ENCODE measurements at regions of chr18 and their contacts with region 1.

Region 1: DNA sequence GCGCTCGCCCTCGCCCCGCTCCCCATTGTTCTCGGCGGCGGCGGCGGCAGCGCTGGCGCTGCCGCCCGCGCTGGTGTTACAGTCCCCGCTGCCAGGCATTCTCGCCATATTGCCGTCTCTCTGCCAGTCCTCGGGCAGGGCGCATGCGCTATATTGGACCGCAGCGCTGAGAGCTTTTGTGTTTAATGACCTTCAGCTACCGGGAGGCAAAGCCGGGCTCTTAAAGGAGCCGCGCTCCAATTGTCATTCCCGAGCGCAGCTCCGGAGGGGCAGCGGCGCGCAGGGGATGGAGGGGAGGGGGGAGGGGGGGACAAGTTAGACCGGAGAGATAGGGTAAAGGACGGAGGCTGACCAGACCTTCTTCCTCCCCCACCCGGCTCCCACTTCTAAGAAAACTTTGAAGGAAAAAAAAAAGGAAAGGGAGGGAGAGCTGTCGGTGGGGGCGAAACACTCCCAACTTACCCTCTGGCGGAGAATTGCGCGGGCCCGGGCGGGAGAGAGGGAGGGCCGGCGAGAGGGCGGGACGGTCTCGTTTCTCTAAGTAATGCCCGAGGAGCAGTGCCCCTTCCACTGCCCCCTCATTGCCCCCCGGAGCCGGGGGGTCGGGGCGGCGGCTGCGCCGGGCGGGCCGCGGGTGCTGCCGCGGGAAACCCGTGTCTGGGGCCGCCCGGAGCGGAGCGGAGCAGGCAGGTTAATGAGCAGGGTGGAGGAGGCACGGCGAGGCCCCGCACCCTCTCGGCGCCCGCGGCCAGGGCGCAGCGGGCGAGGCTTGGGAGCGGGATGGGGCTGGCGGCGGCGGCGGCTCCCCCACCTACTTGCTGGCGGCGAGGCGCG is at the start of gene KCTD1:
- DNase-seq: peak; percentile 81
- ATAC-seq: peak; percentile 35
- H3K4me3 Mint-ChIP-seq: peak within 1 kb of the TSS; percentile 80
- H3K27ac Mint-ChIP-seq: no peak within 1 kb of the TSS
- H3K4me1 Mint-ChIP-seq: peaks cover 58% of the 10 kb centered on the region
- H3K27me3 Mint-ChIP-seq: peaks cover 72% of the 10 kb centered on the region
- CTCF ChIP-seq: no peak
- total RNA-seq, gene KCTD1: 16.9 to 23.3 TPM (median 18.7 TPM) in 3 replicates

Region 2: DNA sequence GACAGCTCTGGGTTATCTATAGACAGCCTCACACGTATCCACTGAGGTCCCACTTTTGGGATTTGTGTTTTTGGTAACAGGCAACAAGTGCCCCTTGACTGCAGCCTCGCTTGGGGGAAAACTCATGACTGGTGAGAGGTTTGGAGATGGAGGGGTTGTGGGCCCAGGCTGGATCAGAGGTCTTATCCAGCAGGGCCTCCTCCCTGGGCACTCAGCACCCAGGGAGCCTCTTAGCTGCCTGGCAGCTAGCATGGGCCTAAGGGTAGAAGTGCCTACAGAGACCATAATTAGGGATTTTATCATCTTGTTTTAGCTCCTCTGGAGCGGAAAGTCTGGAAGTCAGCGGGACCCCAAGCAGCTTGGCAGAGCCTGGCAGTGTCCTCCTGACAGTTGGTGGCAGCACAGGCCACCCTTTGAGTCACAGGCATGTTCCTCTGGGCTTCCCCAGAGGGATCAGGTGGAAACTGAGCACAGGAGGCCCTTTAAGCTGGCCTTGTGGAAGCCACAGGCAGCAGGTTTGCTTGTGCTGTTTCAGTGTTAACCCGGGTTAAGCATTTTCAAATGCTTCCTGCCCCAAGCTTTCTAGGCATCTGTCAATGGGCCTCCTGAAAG is 143.3 kb before region 1 on chr18:
- CTCF ChIA-PET with region 1: interaction called, 14 read pairs
- POLR2A ChIA-PET with region 1: interaction called, 3 read pairs
- DNase-seq: peak; percentile 31
- ATAC-seq: peak; percentile 74
- H3K4me3 Mint-ChIP-seq: no peak overlapping the region
- H3K27ac Mint-ChIP-seq: no peak overlapping the region
- H3K4me1 Mint-ChIP-seq: peaks cover 37% of the 10 kb centered on the region
- H3K27me3 Mint-ChIP-seq: no peaks in the 10 kb centered on the region
- CTCF ChIP-seq: no peak

Region 3: GRCh38 chr18:26458526-26459232 is 90.0 kb before region 1 on chr18:
- CTCF ChIA-PET with region 1: interaction called, 18 read pairs
- POLR2A ChIA-PET with region 1: interaction called, 4 read pairs
- DNase-seq: no peak
- ATAC-seq: no peak
- H3K4me3 Mint-ChIP-seq: no peak overlapping the region
- H3K27ac Mint-ChIP-seq: 0 out of 2 replicates have a peak overlapping the region, but pooled peaks have one; percentile 10
- H3K4me1 Mint-ChIP-seq: peaks cover 28% of the 10 kb centered on the region
- H3K27me3 Mint-ChIP-seq: peaks cover 9% of the 10 kb centered on the region; the same call in 1 of the 2 replicates
- CTCF ChIP-seq: no peak

Region 4: GRCh38 chr18:26468931-26469340 is 79.7 kb before region 1 on chr18:
- CTCF ChIA-PET with region 1: interaction called, 11 read pairs
- POLR2A ChIA-PET with region 1: interaction called, 3 read pairs
- DNase-seq: peak; percentile 77
- ATAC-seq: peak; percentile 97
- H3K4me3 Mint-ChIP-seq: no peak overlapping the region
- H3K27ac Mint-ChIP-seq: no peak overlapping the region
- H3K4me1 Mint-ChIP-seq: peaks cover 20% of the 10 kb centered on the region
- H3K27me3 Mint-ChIP-seq: no peaks in the 10 kb centered on the region
- CTCF ChIP-seq: peak; percentile 81

Region 5: GRCh38 chr18:26480897-26481895 is 67.5 kb before region 1 on chr18:
- CTCF ChIA-PET with region 1: interaction called, 11 read pairs
- POLR2A ChIA-PET with region 1: no interaction called
- DNase-seq: no peak
- ATAC-seq: no peak
- H3K4me3 Mint-ChIP-seq: no peak overlapping the region
- H3K27ac Mint-ChIP-seq: no peak overlapping the region; the same call in 1 of the 2 replicates
- H3K4me1 Mint-ChIP-seq: peaks cover 72% of the 10 kb centered on the region
- H3K27me3 Mint-ChIP-seq: no peaks in the 10 kb centered on the region
- CTCF ChIP-seq: no peak

Region 6: DNA sequence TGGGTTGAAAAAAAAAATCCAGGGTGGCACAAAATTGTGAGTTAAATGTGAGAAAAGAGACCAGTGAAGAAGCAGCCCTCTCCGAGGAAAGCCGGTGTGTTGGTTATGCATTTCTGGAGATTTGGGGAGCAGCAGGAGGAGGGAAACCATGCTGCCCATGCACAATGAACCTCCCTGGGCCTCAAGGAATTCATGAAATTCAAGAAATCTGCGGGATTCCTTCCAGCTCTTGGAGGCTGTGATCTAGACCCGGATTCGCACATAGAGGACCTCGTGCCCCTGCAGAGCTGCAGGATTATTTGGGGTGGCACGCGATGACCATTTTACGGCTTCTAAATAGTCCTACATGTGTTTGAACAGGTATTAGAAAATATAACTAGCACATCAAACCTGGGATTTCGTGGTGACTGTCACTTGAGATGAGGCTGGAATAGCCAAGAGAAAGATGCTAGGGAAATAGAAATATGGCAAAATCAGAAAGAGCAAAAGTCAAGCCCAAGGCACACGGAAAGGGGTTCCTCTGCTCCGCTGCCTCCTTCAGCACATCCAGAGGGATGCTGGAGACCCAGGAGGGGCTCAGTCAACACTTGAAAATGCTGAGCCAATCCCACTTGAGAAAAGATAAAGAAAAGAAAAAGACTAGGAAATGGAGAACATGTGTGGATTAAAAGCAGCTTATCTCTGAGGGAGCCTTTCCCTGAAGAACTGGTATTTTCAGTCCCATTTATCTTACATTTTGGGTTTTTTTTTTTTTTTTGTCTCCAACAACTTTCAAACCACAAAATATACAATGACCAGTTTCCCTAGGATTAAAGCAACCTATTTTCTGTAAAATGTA is 22.3 kb before region 1 on chr18:
- CTCF ChIA-PET with region 1: interaction called, 28 read pairs
- POLR2A ChIA-PET with region 1: interaction called, 6 read pairs
- DNase-seq: peak; percentile 42
- ATAC-seq: peak; percentile 79
- H3K4me3 Mint-ChIP-seq: peak overlapping the region; percentile 53
- H3K27ac Mint-ChIP-seq: peak overlapping the region; percentile 91
- H3K4me1 Mint-ChIP-seq: peaks cover 63% of the 10 kb centered on the region
- H3K27me3 Mint-ChIP-seq: no peaks in the 10 kb centered on the region
- CTCF ChIP-seq: no peak

Region 7: GRCh38 chr18:26568926-26569665 is 20.4 kb after region 1 on chr18:
- CTCF ChIA-PET with region 1: interaction called, 18 read pairs
- POLR2A ChIA-PET with region 1: interaction called, 4 read pairs
- DNase-seq: no peak
- ATAC-seq: peak; percentile 33; the same call in 1 of the 2 replicates
- H3K4me3 Mint-ChIP-seq: no peak overlapping the region
- H3K27ac Mint-ChIP-seq: no peak overlapping the region
- H3K4me1 Mint-ChIP-seq: peaks cover 34% of the 10 kb centered on the region
- H3K27me3 Mint-ChIP-seq: peaks cover 18% of the 10 kb centered on the region
- CTCF ChIP-seq: no peak

Region 8: DNA sequence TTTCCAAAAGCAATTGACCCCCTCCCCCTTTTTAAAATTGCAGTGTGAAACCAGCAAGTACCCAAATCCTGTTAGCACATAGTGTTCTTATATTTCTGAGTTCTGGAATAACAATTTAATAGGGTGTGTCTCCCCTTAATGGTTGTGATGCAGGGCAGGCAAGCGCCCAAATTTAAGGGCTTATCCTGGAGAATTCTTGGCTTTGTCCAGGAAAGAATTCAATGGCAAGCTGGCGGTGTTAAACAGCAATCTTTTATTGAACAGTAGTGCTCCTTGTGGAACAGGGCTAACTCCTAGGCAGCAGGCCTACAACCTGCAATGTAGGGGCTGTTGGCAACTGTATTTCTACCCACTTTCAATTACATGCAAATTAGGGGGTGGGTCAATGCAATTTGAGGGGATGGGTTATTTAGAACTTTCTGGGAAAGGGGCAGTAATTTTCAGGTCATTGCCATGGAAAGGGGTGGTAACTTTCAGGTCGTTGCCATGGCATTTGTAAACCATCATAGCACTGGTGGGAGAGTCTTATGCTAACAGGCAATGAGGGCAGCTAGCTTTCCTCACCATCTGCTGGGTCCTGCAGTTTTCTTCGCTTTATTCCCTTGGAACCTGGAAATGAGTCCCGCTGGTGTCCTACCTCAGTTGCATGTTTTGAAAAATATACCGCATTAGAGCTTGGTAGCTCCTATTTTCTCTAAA is 148.7 kb after region 1 on chr18:
- CTCF ChIA-PET with region 1: no interaction called
- POLR2A ChIA-PET with region 1: no interaction called
- DNase-seq: no peak
- ATAC-seq: peak; percentile 63
- H3K4me3 Mint-ChIP-seq: no peak overlapping the region
- H3K27ac Mint-ChIP-seq: no peak overlapping the region
- H3K4me1 Mint-ChIP-seq: 0 out of 2 replicates have a peak, but pooled peaks cover 2% of the 10 kb centered on the region
- H3K27me3 Mint-ChIP-seq: peaks cover 39% of the 10 kb centered on the region
- CTCF ChIP-seq: no peak

Measured in WTC11 (cell line).